ENCODE measurements at regions of chr1 and their contacts with region 1.

Region 1: DNA sequence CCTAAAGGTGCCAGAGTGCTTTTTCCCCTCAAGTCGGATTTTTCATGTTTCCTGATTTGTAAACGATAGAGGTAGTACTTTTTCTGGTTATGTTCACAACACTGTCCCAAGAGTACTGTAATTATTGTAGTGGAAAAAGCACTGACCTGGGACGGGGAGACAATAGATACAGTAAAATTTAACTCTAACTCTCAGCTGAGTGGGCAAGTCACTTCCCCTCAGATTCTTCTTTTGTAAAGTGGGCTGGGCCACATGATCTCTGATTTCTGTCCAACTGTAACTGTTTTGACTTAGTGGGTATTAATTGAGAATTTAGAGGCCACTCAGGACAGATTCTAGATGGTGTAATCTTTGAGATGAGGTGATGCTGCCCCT is 19.1 kb downstream of the MARCKSL1 start:
- DNase-seq: no peak

Region 2: DNA sequence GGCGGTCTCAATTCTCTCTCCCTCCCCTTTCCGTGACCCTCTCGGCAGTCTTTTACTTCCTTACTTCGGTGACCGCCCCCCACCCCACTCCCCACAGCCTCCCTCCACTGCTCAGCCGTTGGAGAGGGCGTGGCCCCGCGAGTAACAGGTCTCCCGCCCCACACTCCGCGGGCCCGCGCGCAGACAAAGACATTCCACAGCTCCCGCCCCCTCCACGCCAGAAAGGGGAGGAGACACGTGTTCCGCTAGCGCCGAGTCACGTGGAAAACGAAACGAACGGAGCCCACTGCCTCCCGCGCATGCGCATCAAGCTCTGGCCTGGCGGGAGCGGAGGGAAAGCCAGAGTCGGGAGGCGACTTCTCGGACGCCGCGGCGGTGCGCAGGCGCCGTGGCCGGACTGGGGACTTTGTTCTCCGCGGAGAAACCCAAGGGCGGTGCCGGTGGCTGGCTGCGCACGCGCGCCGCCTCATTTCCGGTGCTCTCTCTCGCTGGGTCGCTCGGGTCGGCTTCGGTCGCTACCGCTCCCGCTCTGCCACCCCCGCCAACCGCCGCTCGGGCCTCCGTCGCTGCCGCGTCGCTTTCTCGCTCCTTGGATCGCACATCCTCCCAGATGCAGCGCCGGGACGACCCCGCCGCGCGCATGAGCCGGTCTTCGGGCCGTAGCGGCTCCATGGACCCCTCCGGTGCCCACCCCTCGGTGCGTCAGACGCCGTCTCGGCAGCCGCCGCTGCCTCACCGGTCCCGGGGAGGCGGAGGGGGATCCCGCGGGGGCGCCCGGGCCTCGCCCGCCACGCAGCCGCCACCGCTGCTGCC is 303.3 kb before region 1 on chr1 and contains the start of gene KHDRBS1:
- intact Hi-C with region 1: no loop called
- DNase-seq: peak; percentile 99
- total RNA-seq, gene KHDRBS1: 73.1 TPM

Region 3: DNA sequence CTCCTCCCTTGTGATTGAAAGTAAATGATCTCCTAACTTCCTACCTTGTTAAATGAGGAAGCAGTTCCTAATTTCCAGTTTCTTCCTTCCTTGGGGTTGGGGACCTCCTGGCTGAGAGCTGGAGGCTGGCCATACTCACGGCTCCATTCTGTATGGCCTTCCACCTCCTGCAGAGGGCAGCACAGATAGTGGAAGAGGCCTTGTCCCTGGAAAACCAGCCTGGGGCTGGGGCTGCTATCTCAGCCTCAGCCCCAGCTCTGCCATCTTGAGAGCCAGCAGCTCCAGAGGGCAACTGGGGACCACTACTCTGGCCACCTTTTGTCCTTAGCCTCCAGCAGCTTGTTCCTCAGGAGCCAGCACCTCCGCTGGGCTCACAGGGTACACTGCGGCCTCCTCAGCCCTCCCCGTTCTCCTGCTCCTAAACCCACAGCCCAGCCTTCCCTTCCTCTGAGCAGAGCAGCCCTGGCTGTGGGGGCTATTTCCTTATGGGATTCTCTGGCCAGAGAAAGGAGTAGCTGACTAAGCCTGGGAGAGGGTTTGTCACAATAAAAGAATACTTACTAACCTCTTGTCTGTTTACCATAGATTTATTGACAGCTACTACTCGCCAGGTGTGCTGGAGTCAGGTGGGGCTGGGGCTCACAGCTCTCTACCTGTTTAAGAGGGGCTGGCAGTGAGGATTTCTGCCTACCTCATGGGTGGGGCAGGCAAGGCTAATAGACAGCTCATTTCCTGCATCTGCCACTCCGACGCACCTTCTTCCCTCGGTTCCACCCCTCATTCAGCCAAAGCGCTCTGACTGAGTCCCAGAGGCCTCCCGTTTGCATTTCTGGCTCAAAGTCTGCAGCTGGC is 101.0 kb before region 1 on chr1:
- intact Hi-C with region 1: loop called (anchors 2 kb)
- DNase-seq: no peak